ENCODE measurements at regions of chr5 and their contacts with region 1.

Region 1: DNA sequence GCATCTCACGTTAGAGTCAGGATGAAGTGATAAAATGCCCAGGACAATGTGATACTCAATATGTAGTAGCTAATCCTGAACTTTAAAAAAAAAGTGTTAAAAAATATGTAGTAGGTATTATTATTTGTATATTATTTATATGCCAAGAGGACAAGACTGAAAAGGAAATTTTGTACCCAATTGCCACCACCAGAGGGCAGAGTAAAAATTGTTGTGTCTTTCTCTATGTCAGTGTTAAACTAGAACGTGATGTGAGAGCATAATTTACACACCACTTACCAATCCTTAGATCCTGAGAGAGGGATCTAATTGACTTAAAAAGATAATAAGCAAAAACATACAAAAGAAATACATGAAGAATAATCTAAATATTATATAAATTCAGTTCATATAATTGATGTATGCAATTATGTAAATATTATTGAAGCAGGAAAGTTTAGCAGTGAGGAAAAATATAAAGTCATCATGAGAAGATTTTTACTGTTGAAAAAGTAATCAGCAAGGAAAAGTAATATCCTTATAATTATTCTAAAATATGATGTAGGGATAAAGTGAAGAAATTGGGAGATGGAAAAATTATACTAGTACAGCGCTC is 288.9 kb downstream of the RAB3C start:
- DNase-seq: peak in 4 of 9 donors; percentile 27 to 30 (median 28)
- ATAC-seq: peak; percentile 53
- H3K4me3 ChIP-seq: no peak overlapping the region
- H3K4me3 Mint-ChIP-seq: no peak overlapping the region
- H3K27ac ChIP-seq: no peak overlapping the region
- H3K27ac Mint-ChIP-seq: no peak overlapping the region
- H3K4me1 ChIP-seq: no peaks in the 10 kb centered on the region
- H3K4me1 Mint-ChIP-seq: peaks cover 0 to 1% (median 0%) of the 10 kb centered on the region in 7 donors
- H3K27me3 ChIP-seq: peaks cover 0 to 4% of the 10 kb centered on the region in 2 donors
- H3K27me3 Mint-ChIP-seq: peaks cover 10 to 41% (median 16%) of the 10 kb centered on the region in 5 donors

Region 2: GRCh38 chr5:58810086-58810485 is 61.7 kb before region 1 on chr5:
- CTCF ChIA-PET with region 1: no interaction called
- POLR2A ChIA-PET with region 1: no interaction called
- intact Hi-C with region 1: no loop called
- DNase-seq: no peak
- ATAC-seq: no peak
- H3K4me3 ChIP-seq: no peak overlapping the region
- H3K4me3 Mint-ChIP-seq: no peak overlapping the region
- H3K27ac ChIP-seq: no peak overlapping the region
- H3K27ac Mint-ChIP-seq: no peak overlapping the region
- H3K4me1 ChIP-seq: no peaks in the 10 kb centered on the region
- H3K4me1 Mint-ChIP-seq: peaks cover 0 to 3% (median 0%) of the 10 kb centered on the region in 7 donors
- H3K27me3 ChIP-seq: no peaks in the 10 kb centered on the region
- H3K27me3 Mint-ChIP-seq: peaks cover 5 to 19% (median 8%) of the 10 kb centered on the region in 5 donors

Region 3: GRCh38 chr5:59007460-59008063 is 135.8 kb after region 1 on chr5:
- CTCF ChIA-PET with region 1: no interaction called
- POLR2A ChIA-PET with region 1: no interaction called
- intact Hi-C with region 1: loop called in 1 of 2 experiments (anchors 1 kb)
- DNase-seq: peak in 4 of 9 donors; percentile 12 to 40 (median 29)
- ATAC-seq: no peak
- H3K4me3 ChIP-seq: no peak overlapping the region
- H3K4me3 Mint-ChIP-seq: no peak overlapping the region
- H3K27ac ChIP-seq: no peak overlapping the region
- H3K27ac Mint-ChIP-seq: peak overlapping the region in 1 of 9 donors; percentile 7
- H3K4me1 ChIP-seq: peaks cover 0 to 6% of the 10 kb centered on the region in 2 donors
- H3K4me1 Mint-ChIP-seq: peaks cover 25 to 79% (median 55%) of the 10 kb centered on the region in 7 donors
- H3K27me3 ChIP-seq: no peaks in the 10 kb centered on the region
- H3K27me3 Mint-ChIP-seq: no peaks in the 10 kb centered on the region

Region 4: DNA sequence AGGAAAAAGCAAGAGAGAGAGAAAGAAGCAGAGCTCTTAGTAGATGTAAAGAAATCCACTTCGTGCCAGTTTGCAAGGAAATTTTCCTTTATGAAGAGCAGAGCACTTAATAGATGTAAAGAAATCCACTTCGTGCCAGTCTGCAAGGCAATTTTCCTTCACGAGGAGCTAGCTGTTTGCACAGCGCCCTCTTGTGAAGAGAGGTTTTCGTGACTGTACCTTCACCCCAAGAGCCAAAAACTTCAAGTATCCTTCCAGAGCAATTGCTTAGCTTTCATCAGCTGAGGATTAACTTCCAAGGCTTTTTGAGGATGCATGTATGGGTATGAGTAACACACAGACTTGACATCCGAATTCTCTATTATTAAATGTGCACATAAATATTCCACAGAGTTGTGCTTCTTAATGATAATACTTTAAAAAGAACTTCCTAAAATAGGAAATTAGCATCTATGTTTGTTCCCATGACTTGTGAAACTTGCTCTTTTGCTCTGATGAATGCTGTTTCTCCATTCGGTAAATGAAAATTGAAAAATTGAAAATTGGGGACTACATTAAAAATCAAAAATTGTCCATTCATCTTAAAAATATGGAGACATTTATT is 496.1 kb after region 1 on chr5:
- CTCF ChIA-PET with region 1: no interaction called
- POLR2A ChIA-PET with region 1: no interaction called
- intact Hi-C with region 1: loop called (anchors 5 kb)
- DNase-seq: peak in 8 of 9 donors; percentile 1 to 47 (median 30)
- ATAC-seq: peak; percentile 60
- H3K4me3 ChIP-seq: no peak overlapping the region
- H3K4me3 Mint-ChIP-seq: peak overlapping the region in 1 of 10 donors; percentile 24
- H3K27ac ChIP-seq: no peak overlapping the region
- H3K27ac Mint-ChIP-seq: no peak overlapping the region
- H3K4me1 ChIP-seq: no peaks in the 10 kb centered on the region
- H3K4me1 Mint-ChIP-seq: peaks cover 0 to 5% (median 0%) of the 10 kb centered on the region in 7 donors
- H3K27me3 ChIP-seq: no peaks in the 10 kb centered on the region
- H3K27me3 Mint-ChIP-seq: peaks cover 0 to 32% (median 4%) of the 10 kb centered on the region in 5 donors

Region 5: DNA sequence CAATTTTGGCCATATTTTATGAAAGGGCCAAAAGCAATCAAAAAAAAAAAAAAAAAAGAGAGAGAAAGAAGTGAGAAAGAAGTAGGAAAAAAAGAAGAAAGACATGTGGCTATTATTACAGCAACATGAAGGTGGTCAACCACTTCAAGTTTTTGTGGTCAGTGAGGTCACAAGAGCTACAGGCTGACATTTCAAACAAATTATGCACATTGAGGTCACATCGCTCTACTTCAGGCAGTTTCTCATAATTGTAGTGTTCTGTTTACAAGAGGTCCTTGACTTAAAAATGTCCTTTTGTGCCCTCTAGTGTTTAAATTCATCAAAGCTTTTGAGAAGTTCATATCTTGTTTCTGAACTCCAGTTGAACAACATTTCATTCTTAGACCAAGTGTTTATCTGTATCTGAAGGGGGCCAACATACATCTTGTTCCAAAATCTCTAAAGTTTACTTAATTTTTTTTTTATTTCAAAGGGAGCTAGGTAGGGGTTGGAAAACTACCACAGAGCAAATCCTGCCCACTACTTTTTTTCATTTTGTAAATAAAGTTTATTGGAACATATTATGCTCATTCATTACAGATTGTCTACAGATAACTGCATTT is 508.7 kb after region 1 on chr5:
- CTCF ChIA-PET with region 1: interaction called, 3 read pairs
- POLR2A ChIA-PET with region 1: no interaction called
- intact Hi-C with region 1: loop called (anchors 1 to 2 kb)
- DNase-seq: peak in 6 of 9 donors; percentile 2 to 50 (median 36)
- ATAC-seq: peak; percentile 85
- H3K4me3 ChIP-seq: no peak overlapping the region
- H3K4me3 Mint-ChIP-seq: peak overlapping the region in 1 of 10 donors; percentile 35
- H3K27ac ChIP-seq: no peak overlapping the region
- H3K27ac Mint-ChIP-seq: no peak overlapping the region
- H3K4me1 ChIP-seq: no peaks in the 10 kb centered on the region
- H3K4me1 Mint-ChIP-seq: no peaks in the 10 kb centered on the region
- H3K27me3 ChIP-seq: no peaks in the 10 kb centered on the region
- H3K27me3 Mint-ChIP-seq: peaks cover 0 to 19% (median 0%) of the 10 kb centered on the region in 5 donors

Measured in naive thymus-derived CD4-positive, alpha-beta T cell (primary cell).